ENCODE measurements at regions of chr3 and their contacts with region 1.

Region 1: DNA sequence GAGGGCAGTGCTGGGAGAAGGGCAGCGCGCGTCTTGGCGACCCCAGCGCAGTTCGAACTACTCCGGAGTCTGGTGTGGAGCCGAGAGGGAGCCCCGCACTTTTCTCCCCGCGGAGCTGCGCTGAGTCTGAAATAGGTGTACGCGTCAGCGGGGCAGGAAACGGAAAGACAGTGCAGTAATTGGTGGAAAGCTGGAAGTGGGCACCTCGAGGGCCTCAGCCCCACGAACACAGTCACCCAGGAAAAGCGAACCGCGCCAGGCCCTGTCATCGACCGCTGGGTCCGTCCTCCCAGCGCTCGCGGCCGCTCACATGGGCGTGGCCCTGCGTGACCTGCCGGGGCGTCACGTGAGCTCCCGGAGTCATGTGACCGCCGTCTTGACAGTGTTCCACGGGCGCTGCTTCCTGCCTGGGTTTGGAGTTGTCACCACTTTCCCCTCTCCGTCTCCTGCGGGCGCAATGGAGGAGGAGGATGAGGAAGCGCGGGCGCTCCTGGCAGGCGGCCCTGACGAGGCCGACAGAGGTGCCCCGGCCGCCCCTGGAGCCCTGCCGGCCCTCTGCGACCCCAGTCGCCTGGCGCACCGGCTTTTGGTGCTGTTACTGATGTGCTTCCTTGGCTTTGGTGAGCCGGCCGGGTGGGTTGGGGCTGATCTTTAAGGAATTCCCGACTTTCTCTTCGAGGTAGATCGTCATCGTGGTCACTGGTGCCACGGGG is at the start of gene MFSD1:
- DNase-seq: peak; percentile 92 to 98 (median 96)
- H3K4me3 ChIP-seq: peak within 1 kb of the TSS; percentile 70 to 99 (median 91)
- H3K27ac ChIP-seq: peak within 1 kb of the TSS; percentile 2 to 97 (median 84)
- H3K27me3 ChIP-seq: no peaks in the 10 kb centered on the region
- CTCF ChIP-seq: peak in 36 of 56 donors; percentile 2 to 54 (median 27)
- total RNA-seq, gene MFSD1: 28.4 to 59.0 (median 40.3) TPM

Region 2: GRCh38 chr3:158649791-158650190 is 152.1 kb before region 1 on chr3:
- intact Hi-C with region 1: loop called in 1 of 2 experiments (anchors 5 kb)
- DNase-seq: no peak
- H3K4me3 ChIP-seq: no peak overlapping the region
- H3K27ac ChIP-seq: no peak overlapping the region
- H3K27me3 ChIP-seq: no peaks in the 10 kb centered on the region
- CTCF ChIP-seq: no peak